ENCODE measurements at regions of chr21 and their contacts with region 1.

Region 1: DNA sequence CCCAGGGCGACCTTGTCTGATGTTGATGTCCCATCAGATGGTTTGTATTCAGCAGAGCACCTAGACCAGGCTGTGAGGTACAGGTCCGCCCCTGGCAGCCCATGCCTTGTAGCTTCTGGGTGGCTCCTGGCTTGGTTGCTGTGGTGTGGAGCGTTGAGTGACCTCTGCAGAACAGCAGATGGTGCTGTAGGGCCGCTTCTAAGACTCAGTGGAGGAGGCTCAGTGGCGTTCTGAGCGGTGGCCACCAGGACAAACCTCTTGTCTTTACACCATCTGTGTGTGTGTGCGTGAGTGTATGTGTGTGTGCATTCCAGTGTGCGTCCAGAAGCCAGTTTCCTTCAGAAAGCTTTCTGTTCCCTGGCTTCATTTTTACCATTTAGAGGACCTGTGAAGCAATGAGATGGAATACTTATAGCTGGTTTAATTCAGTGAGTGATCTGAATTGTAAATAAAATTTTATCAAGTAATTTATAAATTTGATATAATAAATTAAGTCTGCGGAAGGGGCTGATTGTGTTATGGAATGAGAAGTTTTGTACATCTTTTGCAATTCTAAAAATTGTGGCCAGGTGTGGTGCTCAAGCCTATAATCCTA is 66.1 kb downstream of the ADARB1 start:
- DNase-seq: peak; percentile 86
- H3K4me3 ChIP-seq: no peak overlapping the region
- H3K27ac ChIP-seq: no peak overlapping the region
- H3K4me1 ChIP-seq: peaks cover 2% of the 10 kb centered on the region
- H3K27me3 ChIP-seq: no peaks in the 10 kb centered on the region
- CTCF ChIP-seq: peak; percentile 61 to 64 (median 63)
- POLR2A ChIP-seq: no peak

Region 2: DNA sequence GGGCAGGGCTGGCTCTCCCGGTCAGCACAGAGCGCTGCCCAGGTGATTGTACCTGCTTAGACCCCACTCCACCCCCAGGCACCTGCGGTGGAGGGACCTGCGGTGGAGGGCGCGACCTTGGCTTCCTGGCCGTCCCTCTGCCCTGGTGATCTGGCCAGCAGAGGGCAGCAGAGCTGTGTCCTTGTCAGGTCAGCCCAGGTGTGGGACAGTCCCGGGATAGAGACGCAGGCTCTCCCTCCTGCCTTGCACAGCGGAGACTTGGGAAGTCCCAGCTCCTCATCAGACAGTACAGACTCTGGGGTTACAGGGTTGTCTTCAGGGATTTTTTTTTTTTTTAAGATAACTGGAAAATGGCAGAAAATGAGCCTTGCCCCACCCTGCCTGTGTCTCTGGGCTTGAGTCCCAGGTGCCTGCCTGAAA is 190.7 kb before region 1 on chr21:
- intact Hi-C with region 1: loop called (anchors 5 kb)
- DNase-seq: peak; percentile 88
- H3K4me3 ChIP-seq: no peak overlapping the region
- H3K27ac ChIP-seq: no peak overlapping the region
- H3K4me1 ChIP-seq: no peaks in the 10 kb centered on the region
- H3K27me3 ChIP-seq: no peaks in the 10 kb centered on the region
- CTCF ChIP-seq: peak; percentile 86 to 90 (median 89)
- POLR2A ChIP-seq: no peak

Region 3: GRCh38 chr21:45266518-45267389 is 126.3 kb after region 1 on chr21:
- intact Hi-C with region 1: loop called (anchors 10 kb)
- DNase-seq: peak; percentile 12
- H3K4me3 ChIP-seq: no peak overlapping the region
- H3K27ac ChIP-seq: no peak overlapping the region
- H3K4me1 ChIP-seq: no peaks in the 10 kb centered on the region
- H3K27me3 ChIP-seq: no peaks in the 10 kb centered on the region
- CTCF ChIP-seq: no peak
- POLR2A ChIP-seq: no peak